MCF 10A (cell line): ENCODE measurements at regions of chr11 and their contacts with region 1.

Region 1: DNA sequence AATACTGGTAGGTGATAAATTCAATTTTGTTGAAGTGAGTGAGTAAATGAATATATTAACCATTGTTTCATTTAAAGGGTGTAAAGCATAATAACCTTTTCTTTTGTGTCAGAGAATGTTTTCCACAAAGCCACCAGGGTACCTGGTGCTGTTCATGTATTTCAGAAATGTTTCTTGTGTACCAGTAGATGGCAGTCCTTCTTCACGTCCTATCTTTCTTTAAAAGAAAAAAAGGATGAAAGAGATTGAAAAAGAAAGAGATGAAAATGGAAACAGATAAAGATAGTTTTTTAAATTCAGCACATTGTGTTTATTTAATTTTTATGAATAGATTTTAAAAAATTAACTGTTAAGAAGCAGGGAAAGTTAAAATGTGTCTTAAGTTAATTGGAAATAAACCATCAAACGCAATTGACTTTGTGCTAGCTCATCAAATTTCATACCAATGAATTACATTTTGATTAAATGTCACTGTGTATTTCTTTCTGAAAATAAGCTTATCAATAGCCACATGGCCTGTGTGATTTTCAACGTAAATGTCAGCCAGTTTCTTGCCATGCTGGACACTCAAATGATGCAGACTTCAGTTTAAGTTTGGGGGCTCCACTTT is 65.5 kb upstream of the CHORDC1 start:
- DNase-seq: peak; percentile 34
- H3K4me3 Mint-ChIP-seq: no peak overlapping the region
- H3K27ac Mint-ChIP-seq: no peak overlapping the region
- H3K4me1 Mint-ChIP-seq: no peaks in the 10 kb centered on the region
- H3K27me3 Mint-ChIP-seq: no peaks in the 10 kb centered on the region
- CTCF ChIP-seq: peak; percentile 70

Region 2: GRCh38 chr11:90434858-90435257 is 146.5 kb after region 1 on chr11:
- CTCF ChIA-PET with region 1: interaction called, 15 read pairs
- POLR2A ChIA-PET with region 1: no interaction called
- intact Hi-C with region 1: loop called (anchors 1 kb)
- DNase-seq: peak; percentile 50
- H3K4me3 Mint-ChIP-seq: no peak overlapping the region
- H3K27ac Mint-ChIP-seq: no peak overlapping the region
- H3K4me1 Mint-ChIP-seq: no peaks in the 10 kb centered on the region
- H3K27me3 Mint-ChIP-seq: peaks cover 9% of the 10 kb centered on the region
- CTCF ChIP-seq: no peak

Region 3: GRCh38 chr11:90453525-90453924 is 165.2 kb after region 1 on chr11:
- CTCF ChIA-PET with region 1: interaction called, 16 read pairs
- POLR2A ChIA-PET with region 1: no interaction called
- intact Hi-C with region 1: no loop called
- DNase-seq: no peak
- H3K4me3 Mint-ChIP-seq: no peak overlapping the region
- H3K27ac Mint-ChIP-seq: no peak overlapping the region
- H3K4me1 Mint-ChIP-seq: peaks cover 12% of the 10 kb centered on the region
- H3K27me3 Mint-ChIP-seq: no peaks in the 10 kb centered on the region
- CTCF ChIP-seq: no peak

Region 4: DNA sequence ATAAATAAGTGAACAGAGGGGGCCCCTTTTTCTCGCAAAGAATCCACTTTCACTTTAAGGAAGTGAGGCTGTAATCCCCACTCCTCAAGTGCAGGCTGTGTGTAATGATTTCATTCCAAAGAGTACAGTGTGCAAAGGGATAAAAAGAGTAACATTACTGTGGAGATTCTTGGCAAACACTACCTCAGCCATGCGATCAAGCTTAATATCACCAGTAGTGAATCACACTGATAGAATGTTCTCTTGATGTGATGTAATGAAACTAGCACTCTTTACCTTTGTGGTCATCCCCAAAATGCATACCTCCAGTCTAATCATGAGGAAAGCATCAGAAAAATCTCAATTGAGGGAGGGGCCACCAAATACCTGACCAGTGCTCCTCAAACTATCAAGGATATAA is 180.6 kb after region 1 on chr11:
- CTCF ChIA-PET with region 1: interaction called, 10 read pairs
- POLR2A ChIA-PET with region 1: no interaction called
- intact Hi-C with region 1: no loop called
- DNase-seq: peak; percentile 39
- H3K4me3 Mint-ChIP-seq: no peak overlapping the region
- H3K27ac Mint-ChIP-seq: no peak overlapping the region
- H3K4me1 Mint-ChIP-seq: peaks cover 12% of the 10 kb centered on the region
- H3K27me3 Mint-ChIP-seq: no peaks in the 10 kb centered on the region
- CTCF ChIP-seq: no peak